ENCODE measurements at regions of chr20 and their contacts with region 1.

Region 1: GRCh38 chr20:57999465-58000111 is 228.9 kb downstream of the ANKRD60 start:
- DNase-seq: no peak
- H3K4me3 ChIP-seq: no peak overlapping the region
- CTCF ChIP-seq: no peak

Region 2: DNA sequence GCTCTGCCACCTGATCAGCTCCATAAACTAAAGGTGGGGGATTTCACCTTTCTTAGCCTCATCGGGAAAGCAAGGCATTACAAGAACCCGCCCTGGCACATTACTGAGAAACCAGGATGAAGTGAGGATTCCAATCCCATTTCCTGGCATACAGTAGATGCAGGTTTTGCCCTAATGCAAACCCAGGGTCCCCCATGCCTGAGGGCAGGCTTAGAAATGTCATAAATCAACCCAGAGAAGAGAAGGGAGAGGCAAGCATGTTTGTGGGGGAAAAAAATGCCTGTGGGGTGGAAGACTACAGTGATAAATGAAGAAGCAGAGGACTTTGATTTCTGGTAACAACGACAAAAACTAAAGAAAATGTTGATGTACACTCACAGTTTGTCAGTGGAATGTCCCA is 271.7 kb before region 1 on chr20:
- in situ Hi-C with region 1: no loop called
- DNase-seq: no peak
- H3K4me3 ChIP-seq: no peak overlapping the region
- CTCF ChIP-seq: no peak

Region 3: GRCh38 chr20:57934007-57934805 is 65.4 kb before region 1 on chr20:
- in situ Hi-C with region 1: loop called (anchors 5 kb)
- DNase-seq: no peak
- H3K4me3 ChIP-seq: no peak overlapping the region
- CTCF ChIP-seq: peak; percentile 11

Measured in astrocyte of the cerebellum (primary cell).